ENCODE measurements at regions of chr4 and their contacts with region 1.

Region 1: DNA sequence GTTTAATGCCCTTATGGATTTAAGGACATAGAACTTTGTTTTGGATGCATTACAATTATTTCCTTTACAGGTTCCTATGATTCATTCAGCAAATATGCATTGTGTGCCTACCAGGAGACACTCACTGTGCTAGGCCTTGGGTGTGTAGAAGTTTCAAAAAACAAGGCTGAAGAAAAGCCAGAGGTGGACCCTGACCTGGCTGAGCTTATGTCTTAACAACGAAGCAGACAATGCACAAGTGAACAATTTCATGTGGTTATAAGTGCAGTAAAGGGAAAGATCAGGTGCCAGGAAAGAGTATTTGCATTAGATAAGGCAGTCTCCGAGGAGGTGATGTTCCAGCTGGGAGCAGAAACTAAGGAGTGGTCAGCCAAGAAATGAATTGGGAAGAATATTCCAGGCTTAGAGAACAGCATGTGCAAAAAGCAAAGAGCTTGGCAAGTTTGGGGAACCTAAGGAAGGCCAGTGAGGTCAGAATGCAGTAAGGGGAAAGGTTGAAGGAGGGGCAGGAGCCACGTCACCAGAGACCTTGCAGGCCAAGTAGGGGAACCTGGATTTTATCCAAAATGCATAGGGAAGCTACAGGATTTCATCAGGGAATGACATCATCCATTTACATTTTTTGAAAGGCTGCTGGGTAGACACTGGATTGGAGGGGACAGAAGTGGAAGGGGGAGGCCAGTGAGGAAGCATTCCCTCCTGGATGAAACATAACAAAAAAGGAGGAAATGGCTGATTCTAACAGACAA is 193.6 kb downstream of the SOWAHB start:
- DNase-seq: peak; percentile 51 to 87
- H3K4me3 ChIP-seq: peak overlapping the region; percentile 35; the same call in 1 of the 2 replicates
- H3K27ac ChIP-seq: peak overlapping the region; percentile 95
- H3K4me1 ChIP-seq: peaks cover 66% of the 10 kb centered on the region
- H3K27me3 ChIP-seq: no peaks in the 10 kb centered on the region
- CTCF ChIP-seq: no peak

Region 2: GRCh38 chr4:76011018-76011670 is 693.2 kb before region 1 on chr4:
- CTCF ChIA-PET with region 1: no interaction called
- POLR2A ChIA-PET with region 1: interaction called, 12 read pairs
- intact Hi-C with region 1: no loop called
- DNase-seq: no peak
- H3K4me3 ChIP-seq: no peak overlapping the region
- H3K27ac ChIP-seq: no peak overlapping the region
- H3K4me1 ChIP-seq: peaks cover 17% of the 10 kb centered on the region
- H3K27me3 ChIP-seq: no peaks in the 10 kb centered on the region
- CTCF ChIP-seq: no peak

Region 3: GRCh38 chr4:76562161-76562560 is 142.1 kb before region 1 on chr4:
- CTCF ChIA-PET with region 1: no interaction called
- POLR2A ChIA-PET with region 1: interaction called, 13 read pairs
- intact Hi-C with region 1: no loop called
- DNase-seq: peak in 1 of 2 experiments; percentile 72
- H3K4me3 ChIP-seq: peak overlapping the region; percentile 13; the same call in 1 of the 2 replicates
- H3K27ac ChIP-seq: peak overlapping the region; percentile 97
- H3K4me1 ChIP-seq: peaks cover 32% of the 10 kb centered on the region
- H3K27me3 ChIP-seq: no peaks in the 10 kb centered on the region
- CTCF ChIP-seq: no peak

Region 4: DNA sequence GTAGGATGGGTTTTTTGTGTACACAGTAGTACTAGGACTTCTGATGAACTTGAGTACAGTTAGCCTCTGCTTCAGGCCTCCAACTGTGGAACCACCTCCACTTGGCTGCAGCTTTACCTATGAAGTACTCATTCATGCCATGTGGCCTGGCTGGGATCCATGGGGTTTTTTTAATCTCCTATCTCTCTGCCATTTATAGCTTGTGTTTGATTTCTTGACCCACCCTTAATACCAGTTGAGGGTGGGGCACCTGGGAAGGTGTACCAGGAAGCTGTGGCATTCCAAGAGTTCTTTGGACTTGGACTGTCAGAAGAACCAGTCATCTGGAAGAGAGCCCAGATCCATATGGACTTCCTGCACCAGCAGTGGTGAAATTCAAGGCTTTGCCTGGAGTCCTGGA is 39.2 kb before region 1 on chr4:
- CTCF ChIA-PET with region 1: interaction called, 3 read pairs
- POLR2A ChIA-PET with region 1: interaction called, 5 read pairs
- intact Hi-C with region 1: loop called (anchors 1 kb)
- DNase-seq: peak; percentile 81 to 92
- H3K4me3 ChIP-seq: no peak overlapping the region
- H3K27ac ChIP-seq: peak overlapping the region; percentile 80
- H3K4me1 ChIP-seq: peaks cover 29% of the 10 kb centered on the region
- H3K27me3 ChIP-seq: no peaks in the 10 kb centered on the region
- CTCF ChIP-seq: no peak

Region 5: DNA sequence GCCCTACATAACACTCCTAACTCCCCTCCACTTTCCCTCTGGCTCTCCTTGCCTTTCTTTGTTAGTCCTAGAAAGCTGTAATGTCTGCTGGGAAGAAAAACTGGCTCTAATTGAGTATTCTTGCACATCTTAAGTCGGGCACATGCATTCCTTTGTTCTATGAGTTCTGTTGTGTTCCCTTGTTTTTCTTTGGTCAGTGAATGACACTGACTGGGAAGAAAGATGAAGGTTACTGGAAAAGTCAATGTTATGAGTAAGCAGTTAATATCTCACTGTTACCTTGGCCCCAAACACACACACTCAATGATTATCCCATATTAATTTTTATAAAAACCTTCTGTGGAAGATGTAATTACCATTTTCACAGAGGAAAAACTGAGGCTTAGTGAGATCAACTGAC is 22.3 kb before region 1 on chr4:
- CTCF ChIA-PET with region 1: no interaction called
- POLR2A ChIA-PET with region 1: interaction called, 10 read pairs
- intact Hi-C with region 1: no loop called
- DNase-seq: no peak
- H3K4me3 ChIP-seq: no peak overlapping the region
- H3K27ac ChIP-seq: no peak overlapping the region
- H3K4me1 ChIP-seq: peaks cover 6% of the 10 kb centered on the region; the same call in 1 of the 2 replicates
- H3K27me3 ChIP-seq: no peaks in the 10 kb centered on the region
- CTCF ChIP-seq: no peak

Region 6: DNA sequence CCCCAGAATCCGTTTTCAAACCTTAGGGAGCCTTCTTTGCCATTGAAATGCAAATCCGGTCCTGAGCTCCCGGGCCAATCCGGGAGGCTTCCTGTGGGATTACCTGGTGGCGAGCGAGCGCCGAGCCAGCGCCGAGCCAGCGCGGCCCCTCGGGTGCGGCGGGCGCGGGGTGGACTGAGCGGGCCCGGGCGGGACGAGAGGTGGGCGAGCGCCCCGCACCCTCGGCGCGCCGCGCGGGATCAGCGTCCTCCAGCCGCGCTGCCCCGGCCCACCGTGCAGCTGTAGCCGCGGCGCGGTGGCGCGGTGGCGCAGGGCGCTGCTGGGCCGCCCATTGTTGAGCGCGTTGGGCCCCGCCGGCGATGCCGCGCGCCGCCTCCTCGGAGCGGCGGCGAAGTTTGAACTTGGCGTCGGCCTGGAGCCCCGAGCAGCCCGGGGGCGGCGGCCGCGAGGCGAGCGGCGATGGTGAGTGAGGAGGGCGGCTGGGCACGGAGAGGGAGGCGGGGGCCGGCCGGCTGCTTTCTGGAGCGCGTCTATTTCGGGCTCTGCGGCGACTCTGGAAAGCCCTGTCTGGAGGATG is 15.0 kb before region 1 on chr4:
- CTCF ChIA-PET with region 1: no interaction called
- POLR2A ChIA-PET with region 1: interaction called, 4 read pairs
- intact Hi-C with region 1: loop called (anchors 1 kb)
- DNase-seq: peak; percentile 68
- H3K4me3 ChIP-seq: peak overlapping the region; percentile 92
- H3K27ac ChIP-seq: peak overlapping the region; percentile 78
- H3K4me1 ChIP-seq: peaks cover 43% of the 10 kb centered on the region
- H3K27me3 ChIP-seq: no peaks in the 10 kb centered on the region
- CTCF ChIP-seq: no peak

Region 7: DNA sequence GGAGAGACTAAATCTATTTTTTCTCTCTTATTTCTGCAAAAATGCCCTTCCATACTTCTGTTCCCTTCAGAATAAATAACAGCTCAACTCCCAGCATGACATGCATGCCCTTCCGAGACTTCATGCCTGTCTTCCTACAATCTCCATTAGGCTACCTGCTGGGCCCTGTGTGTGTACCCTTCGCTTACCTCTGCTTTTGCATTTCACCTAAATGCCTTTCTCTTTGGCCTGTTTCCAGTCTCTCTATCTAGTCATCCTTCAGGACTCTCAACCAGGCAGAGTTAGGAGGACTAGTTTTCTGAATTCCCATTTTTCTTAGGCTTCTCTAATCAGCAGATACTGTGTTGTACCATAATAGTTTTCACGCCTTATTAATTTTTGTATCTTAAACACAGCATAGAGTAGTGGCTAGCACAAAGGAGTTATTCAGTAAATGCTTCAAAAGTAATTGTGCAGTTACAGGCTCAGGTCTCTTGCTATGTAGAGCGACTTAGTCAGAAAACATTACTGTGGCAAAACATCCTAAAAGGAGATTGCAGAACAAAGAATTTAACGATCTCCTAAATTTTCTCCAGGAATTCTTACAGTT is 265.7 kb after region 1 on chr4:
- CTCF ChIA-PET with region 1: no interaction called
- POLR2A ChIA-PET with region 1: no interaction called
- intact Hi-C with region 1: no loop called
- DNase-seq: no peak
- H3K4me3 ChIP-seq: no peak overlapping the region
- H3K27ac ChIP-seq: no peak overlapping the region
- H3K4me1 ChIP-seq: no peaks in the 10 kb centered on the region
- H3K27me3 ChIP-seq: no peaks in the 10 kb centered on the region
- CTCF ChIP-seq: no peak

Measured in PC-9 (cell line).